GM12878 (cell line): ENCODE measurements at regions of chr5 and their contacts with region 1.

Region 1: DNA sequence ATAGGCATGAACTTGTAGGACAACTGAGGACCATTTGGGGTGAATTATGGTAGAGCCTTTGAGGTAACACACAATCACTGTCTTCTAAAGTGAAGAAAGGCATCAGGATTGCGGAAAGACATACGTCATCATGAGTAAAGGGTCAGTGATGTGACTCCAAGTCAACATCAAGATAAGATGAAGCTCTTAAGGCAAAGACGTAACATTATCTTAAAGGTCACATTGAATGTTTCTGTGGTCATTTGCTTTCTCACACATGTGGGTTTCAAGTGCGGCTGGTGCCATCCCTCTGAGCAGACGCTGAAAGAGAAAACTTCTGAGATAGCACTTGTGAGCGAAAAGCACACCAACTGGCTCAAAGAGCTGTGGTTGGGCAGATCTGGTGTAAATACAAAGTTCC is 63.3 kb upstream of the GRAMD2B start:
- DNase-seq: peak; percentile 32
- ATAC-seq: peak; percentile 64
- H3K4me3 ChIP-seq: no peak overlapping the region
- H3K27ac ChIP-seq: no peak overlapping the region
- H3K4me1 ChIP-seq: peaks cover 15% of the 10 kb centered on the region
- H3K27me3 ChIP-seq: no peaks in the 10 kb centered on the region
- CTCF ChIP-seq: no peak
- EP300 ChIP-seq: no peak
- POLR2A ChIP-seq: no peak
- RAD21 ChIP-seq: no peak

Region 2: DNA sequence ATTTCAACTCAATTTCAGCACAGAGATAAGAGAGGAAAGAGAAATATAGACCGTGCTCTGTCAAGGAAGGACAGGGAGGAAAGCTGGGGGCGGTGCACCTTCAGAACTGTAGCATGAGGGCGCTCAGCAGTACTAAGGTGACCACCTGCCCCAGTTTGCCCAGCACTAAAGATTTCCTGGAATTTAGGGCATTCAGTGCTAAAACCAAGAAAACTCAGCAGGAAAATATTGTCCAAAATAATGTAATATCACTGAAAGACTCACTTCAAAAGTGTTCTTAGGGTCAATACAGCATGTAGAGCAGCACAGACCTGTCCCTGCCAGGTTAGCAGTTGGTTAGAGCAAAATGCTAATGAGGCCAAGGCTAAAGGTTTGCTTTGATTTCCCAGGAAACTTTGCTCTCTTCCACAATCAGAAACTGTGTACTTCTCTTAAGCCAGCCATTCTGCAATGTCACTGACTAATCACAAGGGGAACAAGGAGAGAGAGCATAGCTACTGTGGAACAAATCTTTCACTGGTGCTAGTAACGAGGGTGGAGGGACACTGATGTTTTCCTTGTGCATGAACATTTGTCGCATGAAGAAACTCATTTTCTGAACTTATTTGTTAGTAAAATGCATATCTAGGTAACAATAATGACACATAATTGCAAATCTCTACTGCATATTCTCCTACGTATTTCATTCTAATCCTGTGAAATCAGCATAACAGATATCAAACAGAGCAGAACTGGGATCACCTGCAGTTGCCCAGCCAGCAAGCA is 10.3 kb after region 1 on chr5:
- CTCF ChIA-PET with region 1: interaction called, 4 read pairs
- POLR2A ChIA-PET with region 1: interaction called, 4 read pairs
- RAD21 ChIA-PET with region 1: interaction called, 3 read pairs
- SMC1A ChIA-PET with region 1: interaction called, 13 read pairs
- in situ Hi-C with region 1: no loop called
- intact Hi-C with region 1: no loop called
- DNase-seq: no peak
- ATAC-seq: peak; percentile 34; the same call in 1 of the 3 replicates
- H3K4me3 ChIP-seq: no peak overlapping the region
- H3K27ac ChIP-seq: no peak overlapping the region
- H3K4me1 ChIP-seq: no peaks in the 10 kb centered on the region
- H3K27me3 ChIP-seq: no peaks in the 10 kb centered on the region
- CTCF ChIP-seq: no peak
- EP300 ChIP-seq: no peak
- POLR2A ChIP-seq: no peak
- RAD21 ChIP-seq: no peak

Region 3: GRCh38 chr5:126410623-126411022 is 50.7 kb after region 1 on chr5:
- CTCF ChIA-PET with region 1: no interaction called
- POLR2A ChIA-PET with region 1: no interaction called
- RAD21 ChIA-PET with region 1: no interaction called
- SMC1A ChIA-PET with region 1: no interaction called
- in situ Hi-C with region 1: no loop called
- intact Hi-C with region 1: no loop called
- DNase-seq: no peak
- ATAC-seq: no peak
- H3K4me3 ChIP-seq: no peak overlapping the region
- H3K27ac ChIP-seq: no peak overlapping the region
- H3K4me1 ChIP-seq: no peaks in the 10 kb centered on the region
- H3K27me3 ChIP-seq: no peaks in the 10 kb centered on the region
- CTCF ChIP-seq: no peak
- EP300 ChIP-seq: no peak
- POLR2A ChIP-seq: no peak
- RAD21 ChIP-seq: no peak